ENCODE measurements at regions of chr4 and their contacts with region 1.

Region 1: GRCh38 chr4:109406338-109406931 is 27.2 kb upstream of the SEC24B start:
- DNase-seq: no peak
- ATAC-seq: peak in 3 of 4 donors; percentile 70 to 88 (median 85)
- H3K4me3 ChIP-seq: no peak overlapping the region
- H3K27ac ChIP-seq: no peak overlapping the region
- H3K4me1 ChIP-seq: no peaks in the 10 kb centered on the region
- H3K27me3 ChIP-seq: no peaks in the 10 kb centered on the region
- CTCF ChIP-seq: peak; percentile 77

Region 2: GRCh38 chr4:108683479-108683878 is 723.0 kb before region 1 on chr4:
- intact Hi-C with region 1: loop called (anchors 5 kb)
- DNase-seq: no peak
- ATAC-seq: peak in 1 of 4 donors; percentile 62
- H3K4me3 ChIP-seq: no peak overlapping the region
- H3K27ac ChIP-seq: no peak overlapping the region
- H3K4me1 ChIP-seq: no peaks in the 10 kb centered on the region
- H3K27me3 ChIP-seq: no peaks in the 10 kb centered on the region
- CTCF ChIP-seq: peak; percentile 34

Region 3: GRCh38 chr4:108834835-108835384 is 571.5 kb before region 1 on chr4:
- intact Hi-C with region 1: loop called (anchors 2 to 5 kb)
- DNase-seq: no peak
- ATAC-seq: peak in 3 of 4 donors; percentile 42 to 68 (median 46)
- H3K4me3 ChIP-seq: no peak overlapping the region
- H3K27ac ChIP-seq: no peak overlapping the region
- H3K4me1 ChIP-seq: peaks cover 20% of the 10 kb centered on the region
- H3K27me3 ChIP-seq: no peaks in the 10 kb centered on the region
- CTCF ChIP-seq: peak; percentile 68

Region 4: DNA sequence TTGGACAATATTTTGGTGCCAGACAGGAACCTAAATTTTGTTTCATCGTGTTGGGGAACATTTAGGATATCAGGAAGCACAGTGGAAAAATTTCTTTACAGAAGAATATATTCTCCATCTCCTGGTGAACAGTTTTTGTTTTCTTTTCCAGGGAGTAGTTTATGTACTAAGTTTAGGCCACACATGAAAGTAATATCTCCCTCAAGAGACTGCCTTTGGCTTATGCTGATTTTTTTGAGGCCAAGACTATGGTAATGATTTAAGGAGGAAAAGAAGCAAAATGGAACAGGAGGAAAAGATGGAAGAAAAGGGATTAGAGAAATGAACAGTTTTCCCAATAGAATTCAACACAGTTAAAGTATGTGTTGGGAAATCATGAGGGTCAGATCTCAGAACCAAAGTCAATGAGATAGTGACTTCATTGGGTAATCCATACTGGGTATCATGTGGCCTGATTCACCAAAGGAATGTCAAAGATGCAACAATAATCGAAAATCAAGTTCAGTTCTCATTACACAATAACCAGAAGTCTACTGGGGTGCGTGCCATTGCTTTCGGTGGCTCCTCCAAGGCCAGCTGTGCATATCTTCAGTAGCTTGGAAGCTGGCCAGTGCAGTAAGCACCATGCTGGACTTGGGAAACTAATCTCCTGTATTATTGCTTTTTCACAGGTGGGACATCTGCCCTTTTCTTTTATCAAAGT is 338.8 kb before region 1 on chr4:
- intact Hi-C with region 1: loop called in 1 of 2 experiments (anchors 10 kb)
- DNase-seq: peak in 1 of 2 donors; percentile 21
- ATAC-seq: peak in 1 of 4 donors; percentile 7
- H3K4me3 ChIP-seq: no peak overlapping the region
- H3K27ac ChIP-seq: no peak overlapping the region
- H3K4me1 ChIP-seq: no peaks in the 10 kb centered on the region
- H3K27me3 ChIP-seq: no peaks in the 10 kb centered on the region
- CTCF ChIP-seq: no peak

Region 5: GRCh38 chr4:109355835-109356234 is 50.6 kb before region 1 on chr4:
- intact Hi-C with region 1: no loop called
- DNase-seq: no peak
- ATAC-seq: no peak
- H3K4me3 ChIP-seq: no peak overlapping the region
- H3K27ac ChIP-seq: no peak overlapping the region
- H3K4me1 ChIP-seq: no peaks in the 10 kb centered on the region
- H3K27me3 ChIP-seq: no peaks in the 10 kb centered on the region
- CTCF ChIP-seq: no peak

Region 6: DNA sequence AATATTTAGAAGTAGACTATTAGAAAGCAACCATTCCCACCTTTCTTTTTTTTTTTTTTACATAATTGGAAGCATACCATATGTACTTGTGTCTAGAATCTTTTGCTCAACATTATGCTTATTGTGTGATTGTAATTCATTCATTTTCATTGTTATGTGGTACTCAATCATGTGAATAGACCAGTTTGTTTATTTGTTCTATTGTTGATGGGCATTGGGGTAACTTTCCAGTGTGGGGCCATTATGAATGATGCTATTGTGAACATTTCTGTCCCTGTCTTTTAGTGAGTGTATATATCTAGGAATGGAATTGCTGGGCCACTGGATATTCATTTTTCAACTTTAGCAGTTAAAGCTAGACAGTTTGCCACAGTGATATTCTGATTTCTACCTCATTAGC is 91.1 kb after region 1 on chr4:
- intact Hi-C with region 1: no loop called
- DNase-seq: no peak
- ATAC-seq: no peak
- H3K4me3 ChIP-seq: no peak overlapping the region
- H3K27ac ChIP-seq: no peak overlapping the region
- H3K4me1 ChIP-seq: no peaks in the 10 kb centered on the region
- H3K27me3 ChIP-seq: no peaks in the 10 kb centered on the region
- CTCF ChIP-seq: no peak

Region 7: GRCh38 chr4:109631532-109632108 is 225.2 kb after region 1 on chr4:
- intact Hi-C with region 1: no loop called
- DNase-seq: no peak
- ATAC-seq: no peak
- H3K4me3 ChIP-seq: no peak overlapping the region
- H3K27ac ChIP-seq: no peak overlapping the region
- H3K4me1 ChIP-seq: no peaks in the 10 kb centered on the region
- H3K27me3 ChIP-seq: no peaks in the 10 kb centered on the region
- CTCF ChIP-seq: no peak